ENCODE measurements at regions of chr10 and their contacts with region 1.

Region 1: DNA sequence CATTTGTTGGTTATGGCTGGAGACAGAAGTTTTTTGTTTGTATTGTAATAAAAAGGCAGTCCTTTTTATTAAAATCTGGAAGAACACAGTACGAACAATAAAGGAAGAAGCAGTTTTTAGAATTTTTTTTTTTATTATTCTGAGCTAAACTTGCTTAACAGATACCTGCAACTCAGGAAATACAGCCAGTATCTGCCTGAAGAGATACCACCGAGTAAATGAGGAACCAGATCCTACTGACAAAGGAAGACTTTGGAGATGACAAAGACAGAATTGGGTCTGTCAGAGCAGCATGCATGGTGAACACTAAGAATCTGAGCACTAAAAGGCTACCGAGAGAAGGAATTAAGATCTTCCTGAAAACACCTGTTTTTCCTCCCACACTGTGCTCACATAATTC is 1335.9 kb upstream of the SORCS1 start:
- DNase-seq: no peak
- ATAC-seq: no peak
- H3K4me3 ChIP-seq: no peak overlapping the region
- H3K27ac ChIP-seq: no peak overlapping the region
- H3K4me1 ChIP-seq: no peaks in the 10 kb centered on the region
- H3K27me3 ChIP-seq: no peaks in the 10 kb centered on the region
- CTCF ChIP-seq: no peak
- POLR2A ChIP-seq: no peak
- RAD21 ChIP-seq: no peak

Region 2: GRCh38 chr10:108303149-108303548 is 197.2 kb before region 1 on chr10:
- CTCF ChIA-PET with region 1: no interaction called
- POLR2A ChIA-PET with region 1: no interaction called
- RAD21 ChIA-PET with region 1: no interaction called
- intact Hi-C with region 1: no loop called
- DNase-seq: no peak
- ATAC-seq: no peak
- H3K4me3 ChIP-seq: no peak overlapping the region
- H3K27ac ChIP-seq: no peak overlapping the region
- H3K4me1 ChIP-seq: no peaks in the 10 kb centered on the region
- H3K27me3 ChIP-seq: no peaks in the 10 kb centered on the region
- CTCF ChIP-seq: no peak
- POLR2A ChIP-seq: no peak
- RAD21 ChIP-seq: no peak

Region 3: GRCh38 chr10:108582387-108582786 is 82.0 kb after region 1 on chr10:
- CTCF ChIA-PET with region 1: no interaction called
- POLR2A ChIA-PET with region 1: no interaction called
- RAD21 ChIA-PET with region 1: no interaction called
- intact Hi-C with region 1: loop called (anchors 2 kb)
- DNase-seq: no peak
- ATAC-seq: no peak
- H3K4me3 ChIP-seq: no peak overlapping the region
- H3K27ac ChIP-seq: no peak overlapping the region
- H3K4me1 ChIP-seq: no peaks in the 10 kb centered on the region
- H3K27me3 ChIP-seq: no peaks in the 10 kb centered on the region
- CTCF ChIP-seq: no peak
- POLR2A ChIP-seq: no peak
- RAD21 ChIP-seq: no peak

Measured in HCT116 (cell line).